Psoas muscle (tissue), 8 donors: ENCODE measurements at regions of chr4 and their contacts with region 1.

Region 1: DNA sequence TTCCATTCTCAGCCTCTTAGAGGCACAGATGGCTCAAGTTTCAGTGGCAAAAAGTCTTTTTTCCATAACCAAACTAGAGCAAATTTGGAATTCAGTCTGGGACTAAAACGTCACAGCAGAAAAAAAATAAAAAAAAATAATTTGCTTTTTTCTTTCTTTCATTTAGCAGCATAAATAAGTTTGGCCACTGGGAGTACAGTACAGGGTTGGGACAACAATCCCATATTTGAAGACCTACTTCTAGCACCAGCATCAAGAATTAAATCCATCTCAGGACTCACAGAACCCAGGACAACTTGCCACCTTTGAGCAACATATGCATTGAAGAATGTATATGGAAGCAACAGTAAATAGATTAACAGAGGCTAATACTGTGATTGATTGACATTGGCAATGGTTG is 214.0 kb downstream of the FBXW7 start:
- DNase-seq: no peak
- ATAC-seq: no peak
- H3K4me3 ChIP-seq: no peak overlapping the region
- H3K27ac ChIP-seq: no peak overlapping the region
- H3K4me1 ChIP-seq: peaks cover 6% of the 10 kb centered on the region
- H3K27me3 ChIP-seq: no peaks in the 10 kb centered on the region
- CTCF ChIP-seq: no peak

Region 2: DNA sequence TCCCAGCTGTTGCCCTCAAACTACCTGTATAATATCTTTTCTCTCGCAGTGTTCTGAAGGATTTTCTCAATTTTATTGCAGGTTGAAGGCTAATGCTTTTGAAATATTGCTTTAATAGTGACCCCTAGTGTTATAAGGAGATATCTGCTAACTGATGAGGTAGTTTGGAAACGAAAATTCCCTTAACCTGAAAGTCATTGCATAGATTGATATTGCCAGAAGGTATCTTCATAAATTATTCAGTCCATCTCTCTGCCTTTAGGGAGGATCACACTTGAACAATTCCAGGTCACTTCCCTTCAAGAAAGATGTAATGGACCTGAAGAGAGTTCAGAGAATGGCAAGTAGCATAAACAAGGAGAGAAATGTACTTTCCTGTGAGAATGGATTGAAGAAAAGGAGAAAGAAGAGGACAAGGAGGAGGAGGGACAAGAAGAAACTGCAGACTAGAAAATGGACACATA is 413.5 kb after region 1 on chr4:
- intact Hi-C with region 1: no loop called
- DNase-seq: no peak
- ATAC-seq: peak in 2 of 4 donors; percentile 58 to 74
- H3K4me3 ChIP-seq: no peak overlapping the region
- H3K27ac ChIP-seq: no peak overlapping the region
- H3K4me1 ChIP-seq: no peaks in the 10 kb centered on the region
- H3K27me3 ChIP-seq: no peaks in the 10 kb centered on the region
- CTCF ChIP-seq: peak; percentile 60

Region 3: GRCh38 chr4:154164931-154165839 is 1843.3 kb after region 1 on chr4:
- intact Hi-C with region 1: loop called in 1 of 2 experiments (anchors 5 kb)
- DNase-seq: no peak
- ATAC-seq: no peak
- H3K4me3 ChIP-seq: no peak overlapping the region
- H3K27ac ChIP-seq: no peak overlapping the region
- H3K4me1 ChIP-seq: no peaks in the 10 kb centered on the region
- H3K27me3 ChIP-seq: no peaks in the 10 kb centered on the region
- CTCF ChIP-seq: no peak